Ovary (tissue), 10 donors: ENCODE measurements at regions of chr1 and their contacts with region 1.

Region 1: DNA sequence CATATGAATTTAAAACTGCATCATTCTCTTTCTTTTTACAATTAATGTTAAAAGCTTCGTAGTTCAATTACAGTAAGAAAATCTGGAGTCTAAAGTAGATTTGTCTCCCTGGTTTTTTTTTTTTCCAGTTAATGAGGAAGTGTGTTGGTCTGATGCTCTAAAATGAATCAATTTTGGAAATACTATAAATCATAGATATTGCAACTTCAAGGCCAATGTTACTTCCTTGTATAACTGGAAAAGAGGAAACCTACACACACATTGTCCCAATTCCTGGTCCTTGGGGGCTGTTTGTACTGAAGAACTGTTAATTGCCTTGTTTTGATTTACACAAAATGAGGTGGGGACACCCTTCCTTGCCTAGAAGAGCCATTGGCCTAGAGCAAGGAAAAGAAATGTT is 107.2 kb downstream of the RGS2 start:
- DNase-seq: no peak
- H3K4me3 ChIP-seq: no peak overlapping the region
- H3K27ac ChIP-seq: no peak overlapping the region
- H3K4me1 ChIP-seq: peaks cover 3% of the 10 kb centered on the region
- H3K27me3 ChIP-seq: peaks cover 3% of the 10 kb centered on the region
- CTCF ChIP-seq: no peak
- EP300 ChIP-seq: no peak
- POLR2A ChIP-seq: no peak

Region 2: DNA sequence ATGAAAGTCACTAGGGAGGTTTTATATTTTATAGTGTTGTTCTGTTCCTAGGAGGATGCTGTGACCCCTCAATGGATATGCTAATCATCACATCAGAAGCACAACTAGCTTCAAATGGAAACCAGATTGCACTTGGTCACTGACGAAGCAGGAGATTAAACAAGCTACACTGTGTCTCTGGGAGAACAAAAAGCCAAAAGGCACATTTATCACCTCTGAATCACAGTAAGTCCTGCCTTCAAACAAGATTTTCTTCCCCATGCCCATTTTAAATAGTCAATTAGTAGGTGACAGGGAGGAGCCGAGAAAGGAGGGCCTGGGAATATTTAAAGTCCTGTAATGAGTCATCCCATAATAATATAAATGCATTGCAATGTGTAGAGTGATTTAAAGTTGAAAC is 69.1 kb before region 1 on chr1:
- intact Hi-C with region 1: loop called in 1 of 4 experiments (anchors 2 kb)
- DNase-seq: no peak
- H3K4me3 ChIP-seq: no peak overlapping the region
- H3K27ac ChIP-seq: no peak overlapping the region
- H3K4me1 ChIP-seq: no peaks in the 10 kb centered on the region
- H3K27me3 ChIP-seq: no peaks in the 10 kb centered on the region
- CTCF ChIP-seq: no peak
- EP300 ChIP-seq: no peak
- POLR2A ChIP-seq: no peak